A549 (cell line): ENCODE measurements at regions of chr15 and their contacts with region 1.

Region 1: GRCh38 chr15:63905558-63906265 is 72.0 kb upstream of the HERC1 start:
- DNase-seq: no peak
- ATAC-seq: peak in 1 of 2 experiments; percentile 29; a peak in 2 of 6 replicates
- H3K4me3 ChIP-seq: no peak overlapping the region
- H3K27ac ChIP-seq: no peak overlapping the region
- H3K4me1 ChIP-seq: peaks cover 15% of the 10 kb centered on the region; the same call in 2 of the 3 replicates
- CTCF ChIP-seq: no peak
- EP300 ChIP-seq: no peak
- POLR2A ChIP-seq: no peak
- RAD21 ChIP-seq: no peak

Region 2: DNA sequence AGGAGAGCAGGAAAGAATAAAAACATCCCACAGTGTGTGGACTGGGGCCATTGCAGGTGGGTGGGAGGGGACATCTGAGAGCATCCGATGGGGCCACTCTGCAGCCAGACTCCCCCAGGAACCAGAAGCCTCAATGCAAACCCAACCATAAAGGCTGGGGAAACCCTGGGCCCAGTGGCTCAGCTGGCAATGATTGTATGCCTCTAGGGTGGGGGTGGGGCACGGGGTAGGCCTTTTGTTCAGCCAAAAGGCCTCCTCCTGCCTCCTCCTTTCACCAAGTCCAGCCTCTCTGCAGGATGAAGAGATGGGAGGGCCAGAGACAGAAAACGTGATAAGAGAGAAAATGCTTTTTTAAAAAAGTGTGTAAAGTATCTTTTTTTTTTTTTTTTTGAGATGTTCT is 26.5 kb before region 1 on chr15:
- CTCF ChIA-PET with region 1: no interaction called
- POLR2A ChIA-PET with region 1: no interaction called
- DNase-seq: no peak
- ATAC-seq: no peak
- H3K4me3 ChIP-seq: no peak overlapping the region
- H3K27ac ChIP-seq: no peak overlapping the region
- H3K4me1 ChIP-seq: no peaks in the 10 kb centered on the region
- CTCF ChIP-seq: no peak
- EP300 ChIP-seq: no peak
- POLR2A ChIP-seq: no peak
- RAD21 ChIP-seq: no peak

Region 3: DNA sequence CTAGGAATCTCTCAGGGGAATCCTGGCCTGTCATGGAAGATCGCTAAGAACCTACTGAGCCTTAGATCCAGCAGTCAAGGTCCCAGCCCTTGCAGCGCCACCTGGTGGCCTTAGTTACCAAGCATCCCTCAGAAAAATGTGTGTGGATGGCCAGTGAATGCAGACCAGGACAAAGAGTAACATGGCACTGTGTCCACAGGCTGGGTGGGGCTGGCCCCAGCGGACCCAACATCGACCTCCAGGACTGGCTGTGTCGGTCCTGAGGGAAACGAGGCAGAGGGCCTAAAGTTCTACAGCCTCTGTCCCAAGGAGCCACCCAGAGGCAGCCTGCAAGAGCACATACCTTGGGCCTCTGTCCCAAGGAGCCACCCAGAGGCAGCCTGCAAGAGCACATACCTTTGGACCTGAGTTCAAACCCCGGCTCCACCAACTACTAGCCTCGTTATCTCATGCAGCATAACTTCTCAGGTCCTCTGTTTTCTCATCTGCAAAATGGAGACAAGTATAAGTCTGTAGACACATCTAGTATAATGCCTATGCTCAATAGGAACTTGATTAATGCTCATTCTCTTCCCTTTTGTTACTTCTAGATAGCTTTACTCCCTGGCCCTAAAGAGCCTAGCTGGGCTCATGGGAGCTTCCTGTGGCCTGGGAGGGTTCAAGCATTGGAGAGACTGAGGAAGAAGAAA is 14.5 kb before region 1 on chr15:
- CTCF ChIA-PET with region 1: interaction called, 45 read pairs
- POLR2A ChIA-PET with region 1: no interaction called
- DNase-seq: peak; percentile 87 to 88
- ATAC-seq: peak; percentile 80 to 96
- H3K4me3 ChIP-seq: no peak overlapping the region
- H3K27ac ChIP-seq: no peak overlapping the region
- H3K4me1 ChIP-seq: peaks cover 3% of the 10 kb centered on the region; the same call in 2 of the 3 replicates
- CTCF ChIP-seq: peak; percentile 98
- EP300 ChIP-seq: no peak
- POLR2A ChIP-seq: no peak
- RAD21 ChIP-seq: peak; percentile 79 to 83

Region 4: DNA sequence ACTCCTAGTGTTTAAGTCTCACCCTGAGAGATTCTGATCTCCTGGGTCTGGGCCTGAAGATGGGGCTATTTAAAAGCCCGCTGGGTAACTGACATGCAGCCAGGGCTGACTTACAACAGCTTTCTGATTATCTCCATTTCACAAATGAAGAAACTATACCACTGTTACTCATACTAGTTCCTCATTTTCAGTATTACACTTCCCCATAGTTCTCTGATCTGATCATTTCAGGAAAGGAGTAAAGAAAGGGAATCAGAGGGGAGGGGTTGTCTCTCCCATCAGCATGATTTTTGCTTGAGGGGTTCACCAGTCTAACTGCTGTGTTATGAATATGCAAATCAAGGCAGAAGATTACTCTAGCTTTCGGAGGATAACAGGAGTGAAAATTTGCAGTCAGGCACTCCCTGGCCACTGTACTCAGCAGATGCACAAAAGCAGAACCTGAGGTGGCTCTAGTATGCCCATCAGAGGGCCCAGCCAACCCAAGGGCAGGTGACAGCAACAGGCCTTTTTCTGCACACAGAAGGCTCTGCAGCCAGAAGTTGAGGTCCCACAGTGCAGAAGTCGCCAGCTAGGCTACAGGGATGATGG is 81.1 kb after region 1 on chr15:
- CTCF ChIA-PET with region 1: no interaction called
- POLR2A ChIA-PET with region 1: no interaction called
- DNase-seq: no peak
- ATAC-seq: no peak
- H3K4me3 ChIP-seq: no peak overlapping the region
- H3K27ac ChIP-seq: no peak overlapping the region
- H3K4me1 ChIP-seq: no peaks in the 10 kb centered on the region
- CTCF ChIP-seq: no peak
- EP300 ChIP-seq: no peak
- POLR2A ChIP-seq: no peak
- RAD21 ChIP-seq: no peak

Region 5: GRCh38 chr15:64060716-64061115 is 155.0 kb after region 1 on chr15:
- CTCF ChIA-PET with region 1: no interaction called
- POLR2A ChIA-PET with region 1: no interaction called
- DNase-seq: no peak
- ATAC-seq: no peak
- H3K4me3 ChIP-seq: no peak overlapping the region
- H3K27ac ChIP-seq: no peak overlapping the region
- H3K4me1 ChIP-seq: no peaks in the 10 kb centered on the region
- CTCF ChIP-seq: no peak
- EP300 ChIP-seq: no peak
- POLR2A ChIP-seq: no peak
- RAD21 ChIP-seq: no peak